ENCODE measurements at regions of chr15 and their contacts with region 1.

Region 1: DNA sequence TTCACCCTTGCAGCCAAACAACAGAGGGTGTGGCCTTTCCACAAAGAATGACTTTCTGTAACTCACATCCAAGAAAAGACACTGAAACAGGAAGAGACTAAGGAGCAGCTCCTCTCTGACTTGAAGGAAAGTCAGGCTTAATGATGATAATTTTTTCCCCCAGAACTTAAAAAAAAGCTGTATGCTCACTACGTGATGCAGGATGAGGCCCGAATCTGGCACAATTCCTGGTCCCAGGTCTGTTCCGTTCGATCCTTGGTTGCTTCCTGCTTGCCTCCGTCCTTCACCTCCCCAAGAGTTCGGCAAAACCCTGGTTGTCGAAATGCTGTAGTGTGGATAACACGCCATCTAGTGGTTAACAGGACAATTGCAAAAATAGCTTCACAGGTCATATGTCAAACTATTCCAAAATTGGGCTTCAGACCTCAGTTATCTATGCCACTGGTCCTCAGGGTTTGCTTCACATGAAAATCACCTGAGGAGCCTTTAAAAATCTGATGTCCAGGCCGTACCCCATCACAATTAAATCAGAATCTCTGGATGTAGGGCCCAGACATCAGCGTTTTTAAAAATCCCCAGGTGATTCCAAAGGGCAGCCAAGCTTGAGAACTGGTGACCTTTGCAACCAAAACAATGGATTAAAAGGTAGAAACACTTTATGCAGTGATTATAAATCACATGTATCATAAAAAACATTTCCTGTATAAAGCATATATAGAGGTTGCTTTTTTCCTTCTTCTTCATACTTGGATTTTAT is 28.1 kb upstream of the SYNM start:
- DNase-seq: peak in 5 of 6 donors; percentile 46 to 73 (median 66)
- ATAC-seq: peak; percentile 87 to 99 (median 96)
- H3K4me3 ChIP-seq: peak overlapping the region in 2 of 4 donors; percentile 9 to 34
- H3K27ac ChIP-seq: no peak overlapping the region
- H3K4me1 ChIP-seq: no peaks in the 10 kb centered on the region
- H3K27me3 ChIP-seq: no peaks in the 10 kb centered on the region
- CTCF ChIP-seq: peak; percentile 75 to 88 (median 81)

Region 2: GRCh38 chr15:98442379-98442833 is 634.3 kb before region 1 on chr15:
- intact Hi-C with region 1: loop called in 1 of 3 experiments (anchors 10 kb)
- DNase-seq: peak in 3 of 6 donors; percentile 39 to 66 (median 64)
- ATAC-seq: peak; percentile 67 to 96 (median 92)
- H3K4me3 ChIP-seq: no peak overlapping the region
- H3K27ac ChIP-seq: no peak overlapping the region
- H3K4me1 ChIP-seq: no peaks in the 10 kb centered on the region
- H3K27me3 ChIP-seq: no peaks in the 10 kb centered on the region
- CTCF ChIP-seq: peak; percentile 44 to 84 (median 74)

Region 3: DNA sequence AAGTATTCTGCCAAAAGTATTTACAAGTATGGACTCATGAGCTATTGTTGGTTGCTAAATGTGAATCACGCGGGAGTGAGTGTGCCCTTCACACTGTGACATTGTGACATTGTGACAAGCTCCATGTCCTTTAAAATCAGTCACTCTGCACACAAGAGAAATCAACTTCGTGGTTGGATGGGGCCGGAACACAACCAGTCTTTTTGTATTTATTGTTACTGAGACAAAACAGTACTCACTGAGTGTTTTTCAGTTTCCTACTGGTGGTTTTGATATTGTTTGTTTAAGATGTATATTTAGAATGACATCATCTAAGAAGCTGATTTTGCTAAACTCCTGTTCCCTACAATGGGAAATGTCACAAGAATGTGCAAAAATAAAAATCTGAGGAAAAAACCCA is 58.5 kb after region 1 on chr15:
- intact Hi-C with region 1: no loop called
- DNase-seq: no peak
- ATAC-seq: no peak
- H3K4me3 ChIP-seq: no peak overlapping the region
- H3K27ac ChIP-seq: no peak overlapping the region
- H3K4me1 ChIP-seq: no peaks in the 10 kb centered on the region
- H3K27me3 ChIP-seq: no peaks in the 10 kb centered on the region
- CTCF ChIP-seq: no peak

Measured in pancreas (tissue), 10 donors.